ENCODE measurements at regions of chr10 and their contacts with region 1.

Region 1: GRCh38 chr10:96984541-96985131 is 152.5 kb downstream of the LCOR start:
- DNase-seq: no peak
- ATAC-seq: no peak
- H3K4me3 ChIP-seq: no peak overlapping the region
- H3K27ac ChIP-seq: no peak overlapping the region
- H3K4me1 ChIP-seq: no peaks in the 10 kb centered on the region
- H3K27me3 ChIP-seq: no peaks in the 10 kb centered on the region
- CTCF ChIP-seq: no peak

Region 2: DNA sequence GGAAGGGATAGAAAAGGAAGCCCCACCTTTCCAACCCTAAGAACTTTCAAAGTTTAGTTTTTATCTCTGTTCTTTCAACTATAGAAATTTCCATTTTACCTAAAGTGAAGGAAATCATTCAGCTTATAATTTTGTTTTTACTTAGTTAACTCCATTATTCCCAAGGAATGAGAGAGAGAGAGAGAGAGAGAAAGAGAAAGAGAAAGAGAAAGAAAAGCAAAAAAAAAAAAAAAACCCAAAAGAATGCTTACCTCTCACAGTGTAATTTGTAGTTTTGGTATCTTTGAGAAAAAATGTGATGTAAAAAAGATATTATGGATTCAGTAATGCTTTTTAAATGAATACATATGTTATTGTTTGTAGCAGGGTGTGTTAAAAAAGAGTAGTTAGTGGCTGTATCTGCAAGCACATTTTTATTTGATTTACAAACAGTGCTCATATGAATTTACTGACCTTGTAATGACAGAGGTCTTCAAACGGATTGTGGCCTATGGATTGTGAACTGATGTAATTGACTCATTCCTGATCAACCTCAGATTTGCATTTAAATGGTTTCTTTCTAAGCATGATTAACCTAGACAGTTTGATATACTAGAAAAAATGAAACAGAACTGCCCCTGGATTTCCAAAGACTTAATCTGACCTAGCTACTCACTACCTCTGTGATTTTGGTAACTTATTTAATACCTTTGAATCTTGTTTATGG is 87.6 kb before region 1 on chr10:
- CTCF ChIA-PET with region 1: no interaction called
- POLR2A ChIA-PET with region 1: interaction called, 18 read pairs
- in situ Hi-C with region 1: no loop called
- intact Hi-C with region 1: no loop called
- DNase-seq: no peak
- ATAC-seq: no peak
- H3K4me3 ChIP-seq: no peak overlapping the region
- H3K27ac ChIP-seq: no peak overlapping the region
- H3K4me1 ChIP-seq: no peaks in the 10 kb centered on the region; the same call in 1 of the 2 replicates
- H3K27me3 ChIP-seq: no peaks in the 10 kb centered on the region
- CTCF ChIP-seq: no peak

Region 3: DNA sequence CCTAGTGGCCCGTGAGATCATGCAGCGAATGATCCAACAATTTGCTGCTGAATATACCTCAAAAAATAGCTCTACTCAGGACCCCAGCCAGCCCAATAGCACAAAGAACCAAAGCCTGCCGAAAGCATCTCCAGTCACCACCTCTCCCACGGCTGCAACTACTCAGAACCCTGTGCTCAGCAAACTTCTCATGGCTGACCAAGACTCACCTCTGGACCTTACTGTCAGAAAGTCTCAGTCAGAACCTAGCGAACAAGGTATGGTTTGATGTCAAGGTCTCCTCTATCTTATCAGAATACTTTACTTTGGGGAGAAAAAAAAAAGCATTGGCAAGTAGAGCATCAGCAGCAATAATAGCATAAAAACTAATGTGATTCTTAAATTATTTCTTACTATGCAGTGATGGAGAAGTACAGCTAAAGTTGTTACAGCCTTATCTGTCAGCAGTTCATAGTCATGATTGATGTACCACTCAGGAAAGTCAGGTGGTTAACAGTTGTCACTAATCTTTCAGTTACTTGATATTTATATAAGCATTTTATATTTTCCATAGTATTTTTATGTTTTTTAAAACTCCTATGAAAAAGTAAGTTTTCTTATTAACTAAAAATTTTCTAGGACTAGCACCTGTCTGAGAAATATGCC is 35.5 kb before region 1 on chr10:
- CTCF ChIA-PET with region 1: no interaction called
- POLR2A ChIA-PET with region 1: no interaction called
- in situ Hi-C with region 1: loop called (anchors 5 kb)
- intact Hi-C with region 1: no loop called
- DNase-seq: no peak
- ATAC-seq: no peak
- H3K4me3 ChIP-seq: no peak overlapping the region
- H3K27ac ChIP-seq: no peak overlapping the region
- H3K4me1 ChIP-seq: no peaks in the 10 kb centered on the region
- H3K27me3 ChIP-seq: no peaks in the 10 kb centered on the region
- CTCF ChIP-seq: no peak

Region 4: GRCh38 chr10:97010695-97011206 is 26.1 kb after region 1 on chr10:
- CTCF ChIA-PET with region 1: no interaction called
- POLR2A ChIA-PET with region 1: no interaction called
- in situ Hi-C with region 1: no loop called
- intact Hi-C with region 1: no loop called
- DNase-seq: no peak
- ATAC-seq: no peak
- H3K4me3 ChIP-seq: no peak overlapping the region
- H3K27ac ChIP-seq: no peak overlapping the region
- H3K4me1 ChIP-seq: no peaks in the 10 kb centered on the region
- H3K27me3 ChIP-seq: no peaks in the 10 kb centered on the region; the same call in 1 of the 2 replicates
- CTCF ChIP-seq: no peak

Measured in Panc1 (cell line).